T-cell (primary cell): ENCODE measurements at regions of chr2 and their contacts with region 1.

Region 1: GRCh38 chr2:233380132-233380895 is 26.0 kb downstream of the DGKD start:
- DNase-seq: no peak
- ATAC-seq: no peak
- H3K4me3 ChIP-seq: no peak overlapping the region
- H3K4me3 Mint-ChIP-seq: peak overlapping the region in 1 of 3 donors; percentile 9
- H3K27ac ChIP-seq: no peak overlapping the region
- H3K27ac Mint-ChIP-seq: peak overlapping the region; percentile 47 to 66
- H3K4me1 ChIP-seq: peaks cover 7 to 52% of the 10 kb centered on the region in 2 experiments
- H3K4me1 Mint-ChIP-seq: peaks cover 75 to 84% (median 77%) of the 10 kb centered on the region in 3 donors
- H3K27me3 ChIP-seq: no peaks in the 10 kb centered on the region
- H3K27me3 Mint-ChIP-seq: no peaks in the 10 kb centered on the region

Region 2: GRCh38 chr2:233124421-233125080 is 255.8 kb before region 1 on chr2:
- CTCF ChIA-PET with region 1: no interaction called
- POLR2A ChIA-PET with region 1: no interaction called
- DNase-seq: peak in 1 of 35 experiments; percentile 13
- ATAC-seq: no peak
- H3K4me3 ChIP-seq: no peak overlapping the region
- H3K4me3 Mint-ChIP-seq: no peak overlapping the region
- H3K27ac ChIP-seq: no peak overlapping the region
- H3K27ac Mint-ChIP-seq: peak overlapping the region in 1 of 2 donors; percentile 57
- H3K4me1 ChIP-seq: peaks cover 0 to 18% of the 10 kb centered on the region in 2 experiments
- H3K4me1 Mint-ChIP-seq: peaks cover 6 to 19% (median 14%) of the 10 kb centered on the region in 3 donors
- H3K27me3 ChIP-seq: no peaks in the 10 kb centered on the region
- H3K27me3 Mint-ChIP-seq: no peaks in the 10 kb centered on the region

Region 3: GRCh38 chr2:233349005-233349998 is 31.0 kb before region 1 on chr2:
- CTCF ChIA-PET with region 1: no interaction called
- POLR2A ChIA-PET with region 1: no interaction called
- DNase-seq: peak in 1 of 35 experiments; percentile 21
- ATAC-seq: no peak
- H3K4me3 ChIP-seq: no peak overlapping the region
- H3K4me3 Mint-ChIP-seq: peak overlapping the region in 1 of 3 donors; percentile 4
- H3K27ac ChIP-seq: no peak overlapping the region
- H3K27ac Mint-ChIP-seq: no peak overlapping the region
- H3K4me1 ChIP-seq: peaks cover 5 to 23% of the 10 kb centered on the region in 2 experiments
- H3K4me1 Mint-ChIP-seq: peaks cover 37 to 48% (median 42%) of the 10 kb centered on the region in 3 donors
- H3K27me3 ChIP-seq: peaks cover 0 to 5% of the 10 kb centered on the region in 2 experiments
- H3K27me3 Mint-ChIP-seq: no peaks in the 10 kb centered on the region

Region 4: DNA sequence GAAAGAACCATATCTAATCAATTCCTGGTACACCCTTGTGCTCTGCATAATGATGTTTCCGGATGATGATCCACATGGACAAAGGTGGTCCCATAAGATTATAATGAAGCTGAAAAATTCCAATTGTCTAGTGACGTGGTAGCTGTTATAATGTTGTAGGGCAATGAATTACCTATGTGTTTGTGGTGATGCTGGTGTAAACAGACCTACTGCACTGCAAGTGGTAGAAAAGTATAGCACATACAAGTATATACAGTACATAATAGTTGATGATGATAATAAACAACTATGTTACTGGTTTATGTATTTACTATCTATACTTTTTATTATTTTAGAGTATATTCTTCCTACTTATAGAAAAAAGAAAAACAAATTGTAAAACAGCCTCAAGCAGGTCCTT is 17.6 kb before region 1 on chr2:
- CTCF ChIA-PET with region 1: no interaction called
- POLR2A ChIA-PET with region 1: interaction called in 1 of 2 experiments, 12 read pairs
- DNase-seq: no peak
- ATAC-seq: no peak
- H3K4me3 ChIP-seq: no peak overlapping the region
- H3K4me3 Mint-ChIP-seq: no peak overlapping the region
- H3K27ac ChIP-seq: no peak overlapping the region
- H3K27ac Mint-ChIP-seq: no peak overlapping the region
- H3K4me1 ChIP-seq: peaks cover 5 to 12% of the 10 kb centered on the region in 2 experiments
- H3K4me1 Mint-ChIP-seq: peaks cover 59 to 70% (median 59%) of the 10 kb centered on the region in 3 donors
- H3K27me3 ChIP-seq: no peaks in the 10 kb centered on the region
- H3K27me3 Mint-ChIP-seq: no peaks in the 10 kb centered on the region